Panc1 (cell line): ENCODE measurements at regions of chr5 and their contacts with region 1.

Region 1: GRCh38 chr5:98205691-98206461 is 567.6 kb upstream of the RGMB start:
- DNase-seq: no peak
- ATAC-seq: no peak
- H3K4me3 ChIP-seq: no peak overlapping the region
- H3K27ac ChIP-seq: no peak overlapping the region
- H3K4me1 ChIP-seq: no peaks in the 10 kb centered on the region
- H3K27me3 ChIP-seq: no peaks in the 10 kb centered on the region
- CTCF ChIP-seq: no peak

Region 2: GRCh38 chr5:98268162-98268860 is 62.4 kb after region 1 on chr5:
- CTCF ChIA-PET with region 1: no interaction called
- POLR2A ChIA-PET with region 1: interaction called, 14 read pairs
- in situ Hi-C with region 1: no loop called
- intact Hi-C with region 1: no loop called
- DNase-seq: no peak
- ATAC-seq: no peak
- H3K4me3 ChIP-seq: no peak overlapping the region
- H3K27ac ChIP-seq: no peak overlapping the region
- H3K4me1 ChIP-seq: no peaks in the 10 kb centered on the region
- H3K27me3 ChIP-seq: no peaks in the 10 kb centered on the region
- CTCF ChIP-seq: no peak